B cell (primary cell): ENCODE measurements at regions of chr6 and their contacts with region 1.

Region 1: GRCh38 chr6:33248925-33249731 is 22.5 kb downstream of the VPS52 start:
- DNase-seq: peak; percentile 99
- ATAC-seq: peak; percentile 85
- H3K4me3 ChIP-seq: peak overlapping the region; percentile 63 to 84 (median 75)
- H3K4me3 Mint-ChIP-seq: peak overlapping the region; percentile 97
- H3K27ac ChIP-seq: peak overlapping the region; percentile 75 to 88
- H3K27ac Mint-ChIP-seq: peak overlapping the region; percentile 97
- H3K4me1 ChIP-seq: peaks cover 12 to 24% of the 10 kb centered on the region in 2 donors
- H3K4me1 Mint-ChIP-seq: peaks cover 31% of the 10 kb centered on the region
- H3K27me3 ChIP-seq: peaks cover 0 to 4% (median 0%) of the 10 kb centered on the region in 4 experiments
- H3K27me3 Mint-ChIP-seq: peaks cover 4% of the 10 kb centered on the region
- CTCF ChIP-seq: no peak

Region 2: GRCh38 chr6:32984605-32985389 is 264.3 kb before region 1 on chr6:
- CTCF ChIA-PET with region 1: interaction called, 13 read pairs
- POLR2A ChIA-PET with region 1: interaction called, 3 read pairs
- intact Hi-C with region 1: no loop called
- DNase-seq: peak; percentile 92
- ATAC-seq: peak; percentile 95
- H3K4me3 ChIP-seq: no peak overlapping the region
- H3K4me3 Mint-ChIP-seq: no peak overlapping the region
- H3K27ac ChIP-seq: peak overlapping the region; percentile 13 to 60
- H3K27ac Mint-ChIP-seq: peak overlapping the region; percentile 28
- H3K4me1 ChIP-seq: peaks cover 17 to 19% of the 10 kb centered on the region in 2 donors
- H3K4me1 Mint-ChIP-seq: peaks cover 33% of the 10 kb centered on the region
- H3K27me3 ChIP-seq: no peaks in the 10 kb centered on the region
- H3K27me3 Mint-ChIP-seq: no peaks in the 10 kb centered on the region
- CTCF ChIP-seq: peak; percentile 91

Region 3: GRCh38 chr6:33118525-33119123 is 130.5 kb before region 1 on chr6:
- CTCF ChIA-PET with region 1: interaction called, 12 read pairs
- POLR2A ChIA-PET with region 1: interaction called, 3 read pairs
- intact Hi-C with region 1: loop called (anchors 1 kb)
- DNase-seq: peak; percentile 82
- ATAC-seq: peak; percentile 48
- H3K4me3 ChIP-seq: no peak overlapping the region
- H3K4me3 Mint-ChIP-seq: peak overlapping the region; percentile 47
- H3K27ac ChIP-seq: no peak overlapping the region
- H3K27ac Mint-ChIP-seq: no peak overlapping the region
- H3K4me1 ChIP-seq: peaks cover 43 to 47% of the 10 kb centered on the region in 2 donors
- H3K4me1 Mint-ChIP-seq: peaks cover 46% of the 10 kb centered on the region
- H3K27me3 ChIP-seq: no peaks in the 10 kb centered on the region
- H3K27me3 Mint-ChIP-seq: peaks cover 3% of the 10 kb centered on the region
- CTCF ChIP-seq: peak; percentile 92

Region 4: GRCh38 chr6:33200219-33201146 is 48.6 kb before region 1 on chr6 and contains the starts of genes RXRB and SLC39A7:
- CTCF ChIA-PET with region 1: interaction called, 11 read pairs
- POLR2A ChIA-PET with region 1: interaction called, 3 read pairs
- intact Hi-C with region 1: loop called (anchors 1 kb)
- DNase-seq: peak; percentile 100
- ATAC-seq: peak; percentile 74
- H3K4me3 ChIP-seq: peak within 1 kb of the TSS; percentile 83 to 99 (median 95)
- H3K4me3 Mint-ChIP-seq: peak within 1 kb of the TSS; percentile 99
- H3K27ac ChIP-seq: peak within 1 kb of the TSS; percentile 93 to 94
- H3K27ac Mint-ChIP-seq: peak within 1 kb of the TSS; percentile 99
- H3K4me1 ChIP-seq: peaks cover 30 to 57% of the 10 kb centered on the region in 2 donors
- H3K4me1 Mint-ChIP-seq: peaks cover 71% of the 10 kb centered on the region
- H3K27me3 ChIP-seq: no peaks in the 10 kb centered on the region
- H3K27me3 Mint-ChIP-seq: no peaks in the 10 kb centered on the region
- CTCF ChIP-seq: no peak
- total RNA-seq, gene RXRB: 94.1 and 99.9 TPM in 2 replicates
- total RNA-seq, gene SLC39A7: 26.1 and 29.6 TPM in 2 replicates

Region 5: GRCh38 chr6:33216117-33216649 is 32.9 kb before region 1 on chr6:
- CTCF ChIA-PET with region 1: no interaction called
- POLR2A ChIA-PET with region 1: no interaction called
- intact Hi-C with region 1: no loop called
- DNase-seq: no peak
- ATAC-seq: no peak
- H3K4me3 ChIP-seq: no peak overlapping the region
- H3K4me3 Mint-ChIP-seq: no peak overlapping the region
- H3K27ac ChIP-seq: no peak overlapping the region
- H3K27ac Mint-ChIP-seq: no peak overlapping the region
- H3K4me1 ChIP-seq: peaks cover 14 to 15% of the 10 kb centered on the region in 2 donors
- H3K4me1 Mint-ChIP-seq: peaks cover 19% of the 10 kb centered on the region
- H3K27me3 ChIP-seq: peaks cover 0 to 44% (median 13%) of the 10 kb centered on the region in 4 experiments
- H3K27me3 Mint-ChIP-seq: peaks cover 48% of the 10 kb centered on the region
- CTCF ChIP-seq: no peak

Region 6: GRCh38 chr6:33288921-33289748 is 40.0 kb after region 1 on chr6 and contains the starts of genes PFDN6 and WDR46:
- CTCF ChIA-PET with region 1: interaction called, 5 read pairs
- POLR2A ChIA-PET with region 1: interaction called, 3 read pairs
- intact Hi-C with region 1: loop called (anchors 2 kb)
- DNase-seq: peak; percentile 93
- ATAC-seq: peak; percentile 96
- H3K4me3 ChIP-seq: peak within 1 kb of the TSS; percentile 78 to 99 (median 86)
- H3K4me3 Mint-ChIP-seq: peak within 1 kb of the TSS; percentile 93
- H3K27ac ChIP-seq: peak within 1 kb of the TSS; percentile 42 to 68
- H3K27ac Mint-ChIP-seq: peak within 1 kb of the TSS; percentile 86
- H3K4me1 ChIP-seq: peaks cover 19 to 25% of the 10 kb centered on the region in 2 donors
- H3K4me1 Mint-ChIP-seq: peaks cover 38% of the 10 kb centered on the region
- H3K27me3 ChIP-seq: no peaks in the 10 kb centered on the region
- H3K27me3 Mint-ChIP-seq: no peaks in the 10 kb centered on the region
- CTCF ChIP-seq: no peak
- total RNA-seq, gene PFDN6: 44.7 and 51.1 TPM in 2 replicates
- total RNA-seq, gene WDR46: 66.4 and 77.2 TPM in 2 replicates